CD14-positive monocyte (primary cell): ENCODE measurements at regions of chr3 and their contacts with region 1.

Region 1: DNA sequence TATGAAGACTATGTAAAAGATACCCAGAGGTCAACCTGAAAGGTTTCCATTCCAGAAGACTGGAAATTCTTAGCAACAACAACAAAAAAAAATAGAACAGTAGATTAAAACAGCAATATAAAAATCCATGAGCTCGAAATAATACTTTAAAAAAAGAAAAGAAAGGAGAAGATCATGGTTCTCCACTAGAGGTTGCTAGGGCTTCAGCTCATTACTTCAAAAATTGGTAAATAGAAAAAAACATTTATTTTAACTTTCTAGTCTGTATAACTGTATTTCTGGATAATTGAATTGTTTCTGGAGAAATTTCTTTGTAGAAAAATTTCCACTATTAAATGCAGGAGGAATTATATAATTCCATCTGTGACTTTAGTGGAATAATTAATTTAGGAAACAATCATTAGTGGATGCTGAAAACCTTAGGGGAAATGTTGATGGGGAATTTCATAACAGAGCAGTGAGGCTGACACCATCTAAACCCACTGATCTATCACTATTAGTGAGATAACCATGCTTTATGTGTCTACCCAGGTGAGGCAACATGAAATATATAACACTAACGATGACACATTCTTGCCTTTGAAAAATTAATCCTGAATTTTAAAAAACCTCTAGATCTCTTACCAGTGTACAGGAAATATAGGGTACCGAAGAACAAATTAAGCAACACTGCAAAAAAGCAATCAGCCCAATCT is 62.5 kb upstream of the SNRK start:
- DNase-seq: peak in 1 of 3 donors; percentile 41
- H3K4me3 ChIP-seq: no peak overlapping the region
- H3K4me3 Mint-ChIP-seq: no peak overlapping the region
- H3K27ac ChIP-seq: no peak overlapping the region
- H3K27ac Mint-ChIP-seq: no peak overlapping the region
- H3K4me1 ChIP-seq: no peaks in the 10 kb centered on the region
- H3K4me1 Mint-ChIP-seq: no peaks in the 10 kb centered on the region
- H3K27me3 ChIP-seq: no peaks in the 10 kb centered on the region
- H3K27me3 Mint-ChIP-seq: peaks cover under 1 to 2% (median 2%) of the 10 kb centered on the region in 3 donors
- CTCF ChIP-seq: peak; percentile 60

Region 2: DNA sequence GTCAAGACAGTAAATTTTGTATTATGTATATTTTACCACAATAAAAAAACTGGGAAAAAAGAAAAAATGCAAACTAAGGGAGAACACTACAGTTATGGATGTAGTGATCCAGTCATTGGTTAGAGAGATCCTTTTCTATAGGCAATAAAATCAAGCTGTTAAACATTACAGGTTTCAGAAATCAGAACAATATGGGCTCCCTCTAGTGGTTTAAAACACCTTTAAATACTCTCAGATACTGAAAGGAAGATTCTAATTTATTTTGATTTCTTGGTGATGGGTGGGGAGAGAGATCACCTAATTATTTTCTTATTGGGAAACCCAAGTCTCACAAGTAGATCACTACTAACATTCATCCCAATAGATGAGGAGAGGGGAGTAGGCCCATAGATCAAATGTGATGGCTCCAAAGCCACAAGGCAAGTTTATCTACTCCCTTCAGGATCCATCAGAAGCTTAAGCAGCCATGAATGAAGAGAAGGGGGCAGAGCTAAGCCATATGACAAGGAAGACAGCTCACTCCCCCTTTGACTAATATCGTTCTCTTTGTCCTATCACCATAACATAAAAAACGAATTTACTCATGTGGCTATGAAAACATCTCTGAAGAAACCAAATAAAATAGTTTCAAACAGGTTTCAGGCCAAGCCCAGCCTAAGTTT is 279.4 kb after region 1 on chr3:
- intact Hi-C with region 1: loop called in 1 of 2 experiments (anchors 10 kb)
- DNase-seq: peak in 1 of 3 donors; percentile 39
- H3K4me3 ChIP-seq: no peak overlapping the region
- H3K4me3 Mint-ChIP-seq: no peak overlapping the region
- H3K27ac ChIP-seq: no peak overlapping the region
- H3K27ac Mint-ChIP-seq: no peak overlapping the region
- H3K4me1 ChIP-seq: peaks cover 13 to 16% of the 10 kb centered on the region in 2 donors
- H3K4me1 Mint-ChIP-seq: peaks cover 21% of the 10 kb centered on the region
- H3K27me3 ChIP-seq: no peaks in the 10 kb centered on the region
- H3K27me3 Mint-ChIP-seq: peaks cover 0 to 3% (median 0%) of the 10 kb centered on the region in 3 donors
- CTCF ChIP-seq: peak; percentile 71